ENCODE measurements at regions of chr10 and their contacts with region 1.

Region 1: DNA sequence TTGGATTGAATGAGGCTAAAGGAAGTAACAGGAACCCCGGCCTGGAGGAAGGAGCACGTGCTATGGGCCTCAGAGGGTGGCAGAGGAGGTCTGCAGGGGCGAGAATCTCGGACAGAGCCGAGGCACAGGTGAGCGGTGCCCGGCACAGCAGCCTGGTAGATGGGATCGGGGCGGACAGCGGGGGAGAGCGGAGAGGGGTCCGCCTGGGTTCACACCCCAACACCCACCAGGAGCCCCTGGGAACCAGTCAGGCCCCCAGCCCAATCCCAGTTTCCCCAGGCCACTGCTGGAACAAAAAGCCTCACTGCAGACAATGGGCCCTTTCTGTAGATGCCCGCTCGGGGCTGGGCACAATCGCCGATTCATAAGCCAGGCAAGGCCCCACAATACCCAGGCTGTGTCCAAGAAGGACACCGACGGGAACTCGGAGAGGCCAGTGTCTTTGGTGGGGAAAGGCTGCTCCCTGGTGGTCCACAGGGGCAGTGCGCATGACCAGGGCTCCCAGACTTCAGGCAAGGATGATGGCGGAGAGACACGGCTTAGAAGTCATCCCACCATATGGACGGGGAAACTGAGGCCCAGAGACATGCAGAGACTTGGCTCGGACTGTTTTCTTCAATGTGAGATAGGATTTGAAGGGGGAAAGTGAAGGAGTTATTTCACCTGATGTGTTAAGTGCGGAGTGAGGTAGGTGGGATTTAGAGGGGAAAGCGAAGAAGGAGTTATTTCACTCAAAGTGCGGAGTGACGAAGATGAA is 106.9 kb upstream of the GPR26 start:
- DNase-seq: peak; percentile 78 to 97 (median 92)

Region 2: GRCh38 chr10:123043409-123043925 is 515.8 kb before region 1 on chr10:
- intact Hi-C with region 1: loop called (anchors 5 kb)
- DNase-seq: peak; percentile 29 to 88 (median 74)

Region 3: GRCh38 chr10:123132576-123133477 is 426.4 kb before region 1 on chr10:
- intact Hi-C with region 1: loop called (anchors 5 kb)
- DNase-seq: peak; percentile 80 to 95 (median 88)

Region 4: GRCh38 chr10:123706236-123706635 is 147.0 kb after region 1 on chr10:
- intact Hi-C with region 1: no loop called
- DNase-seq: peak in 1 of 42 donors; percentile 7

Measured in head of caudate nucleus (tissue), 42 donors.